ENCODE measurements at regions of chr1 and their contacts with region 1.

Region 1: GRCh38 chr1:106465666-106466065 is 590.8 kb upstream of the PRMT6 start:
- DNase-seq: no peak
- ATAC-seq: no peak

Region 2: GRCh38 chr1:106480629-106481028 is 15.0 kb after region 1 on chr1:
- intact Hi-C with region 1: loop called (anchors 1 kb)
- DNase-seq: no peak
- ATAC-seq: no peak